A673 (cell line): ENCODE measurements at regions of chr5 and their contacts with region 1.

Region 1: DNA sequence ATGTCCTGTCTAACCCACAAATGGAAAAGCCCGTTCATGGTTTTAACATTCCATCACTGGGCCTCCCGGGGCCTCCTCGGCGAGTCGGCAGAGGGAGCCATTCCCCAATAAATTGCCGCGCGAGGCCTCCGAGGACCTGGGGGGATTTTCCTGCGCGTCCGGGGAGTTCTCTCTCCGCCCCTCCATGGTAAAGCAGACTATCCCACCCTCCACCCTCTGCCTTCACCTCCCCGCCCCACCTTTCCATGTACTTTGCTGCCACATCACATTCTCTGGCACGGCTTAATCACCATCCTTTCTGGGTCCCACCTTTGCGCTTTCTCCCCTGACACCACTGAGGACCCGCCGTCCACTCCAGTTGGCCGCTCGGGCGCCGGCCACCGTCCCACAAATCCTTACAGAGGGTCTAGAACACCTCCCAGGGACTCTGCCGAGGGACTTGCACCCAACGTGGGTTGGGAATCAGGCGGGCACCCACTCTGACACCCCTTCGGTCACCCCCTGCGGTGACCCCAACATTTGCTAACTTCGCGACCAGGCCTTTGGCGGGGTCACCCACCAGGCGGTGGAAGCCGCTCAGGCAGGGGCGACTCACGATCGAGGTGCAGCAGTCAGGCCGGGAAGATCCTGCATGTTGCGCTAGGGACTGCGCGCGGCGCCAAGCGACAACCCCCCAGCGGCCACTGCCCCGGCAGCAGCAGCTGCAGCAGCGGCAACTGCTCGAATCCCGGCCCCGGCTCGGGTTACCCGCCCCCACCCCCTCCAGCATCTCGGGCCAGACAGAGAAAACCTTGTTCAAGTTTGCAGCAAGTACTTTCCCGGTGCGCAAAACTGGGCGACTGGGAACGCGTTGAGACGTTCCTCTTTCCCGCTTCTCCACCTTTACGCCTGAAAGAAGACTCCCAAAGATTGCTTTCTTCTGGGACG is at the start of gene MEGF10:
- DNase-seq: peak; percentile 69
- H3K4me3 ChIP-seq: peak within 1 kb of the TSS; percentile 40
- H3K27ac ChIP-seq: no peak within 1 kb of the TSS
- H3K4me1 ChIP-seq: peaks cover 7% of the 10 kb centered on the region
- H3K27me3 ChIP-seq: peaks cover 41% of the 10 kb centered on the region
- CTCF ChIP-seq: peak; percentile 88
- total RNA-seq, gene MEGF10: 0.71 and 0.87 TPM in 2 replicates

Region 2: DNA sequence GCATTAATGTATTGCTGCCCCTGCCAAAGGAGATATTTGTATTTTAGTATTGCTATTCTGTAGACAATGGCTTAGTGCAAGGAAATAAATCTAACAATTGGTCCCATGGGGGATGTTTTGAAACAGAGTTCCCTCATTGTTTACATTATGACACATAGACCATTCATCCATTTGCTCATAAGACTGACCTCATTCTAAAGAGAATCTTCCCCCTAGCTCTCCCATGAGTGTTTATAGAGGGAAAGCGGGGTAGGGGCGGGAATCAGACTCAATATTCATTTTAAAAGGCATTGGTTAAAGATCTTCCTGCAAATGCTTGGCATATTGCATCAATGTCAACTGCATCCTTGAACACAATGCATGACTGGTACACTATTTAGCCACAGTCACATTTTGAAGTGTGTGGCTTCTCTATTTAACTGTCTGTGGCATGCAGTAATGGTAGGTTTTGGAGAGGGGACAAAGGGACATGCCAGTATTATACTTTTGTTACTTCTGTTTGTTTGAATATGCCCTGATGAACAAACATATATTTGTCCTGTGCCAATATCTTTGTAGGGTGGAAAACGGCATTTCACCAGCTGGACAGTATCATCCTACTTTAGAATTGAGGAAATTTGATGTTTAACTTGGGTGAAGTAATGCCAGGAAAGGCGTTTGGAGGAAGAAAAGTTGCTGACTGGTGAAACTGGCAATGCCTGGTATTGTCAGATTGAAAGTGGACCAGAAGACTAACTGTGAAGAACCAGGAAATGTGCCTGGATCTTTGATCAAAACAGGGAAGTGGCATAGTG is 83.8 kb before region 1 on chr5:
- CTCF ChIA-PET with region 1: no interaction called
- POLR2A ChIA-PET with region 1: no interaction called
- intact Hi-C with region 1: no loop called
- DNase-seq: peak; percentile 33
- H3K4me3 ChIP-seq: no peak overlapping the region
- H3K27ac ChIP-seq: no peak overlapping the region
- H3K4me1 ChIP-seq: no peaks in the 10 kb centered on the region
- H3K27me3 ChIP-seq: peaks cover 12% of the 10 kb centered on the region
- CTCF ChIP-seq: no peak

Region 3: GRCh38 chr5:127235136-127235535 is 55.1 kb before region 1 on chr5:
- CTCF ChIA-PET with region 1: no interaction called
- POLR2A ChIA-PET with region 1: no interaction called
- intact Hi-C with region 1: no loop called
- DNase-seq: no peak
- H3K4me3 ChIP-seq: no peak overlapping the region
- H3K27ac ChIP-seq: no peak overlapping the region
- H3K4me1 ChIP-seq: no peaks in the 10 kb centered on the region
- H3K27me3 ChIP-seq: peaks cover 10% of the 10 kb centered on the region
- CTCF ChIP-seq: no peak

Region 4: DNA sequence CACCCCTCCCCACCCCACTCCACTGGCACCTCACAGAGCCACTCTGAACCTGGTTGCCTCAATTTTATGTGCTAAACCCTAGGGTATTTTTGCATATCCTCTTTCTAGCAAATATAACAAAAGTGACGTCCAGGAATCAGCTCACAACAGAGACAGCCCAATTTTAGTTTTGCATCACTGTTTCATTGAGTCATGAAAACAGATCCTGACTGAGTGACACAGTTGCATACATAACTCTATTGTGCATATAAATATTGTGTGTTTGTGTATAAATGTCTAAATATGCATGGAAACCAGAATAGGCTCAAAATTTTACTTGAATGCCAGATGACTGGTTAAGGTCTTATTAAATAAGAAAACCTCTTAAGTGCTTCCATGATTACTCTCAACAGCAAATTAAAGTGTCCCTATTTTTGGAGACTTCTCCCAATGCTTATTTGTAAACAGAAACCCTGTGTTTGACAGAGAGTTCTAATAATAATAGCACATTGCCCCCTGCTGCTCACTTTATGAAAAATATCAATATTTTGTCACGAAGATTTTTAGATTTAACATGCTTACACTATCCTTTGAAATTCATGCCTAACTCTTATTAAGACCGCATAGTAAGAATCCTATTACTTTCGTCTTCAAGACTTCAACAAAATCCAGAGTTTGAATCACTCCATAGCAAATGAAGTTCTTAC is 151.7 kb after region 1 on chr5:
- CTCF ChIA-PET with region 1: no interaction called
- POLR2A ChIA-PET with region 1: no interaction called
- intact Hi-C with region 1: loop called (anchors 1 kb)
- DNase-seq: peak; percentile 44
- H3K4me3 ChIP-seq: no peak overlapping the region
- H3K27ac ChIP-seq: no peak overlapping the region
- H3K4me1 ChIP-seq: no peaks in the 10 kb centered on the region
- H3K27me3 ChIP-seq: no peaks in the 10 kb centered on the region
- CTCF ChIP-seq: peak; percentile 52

Region 5: DNA sequence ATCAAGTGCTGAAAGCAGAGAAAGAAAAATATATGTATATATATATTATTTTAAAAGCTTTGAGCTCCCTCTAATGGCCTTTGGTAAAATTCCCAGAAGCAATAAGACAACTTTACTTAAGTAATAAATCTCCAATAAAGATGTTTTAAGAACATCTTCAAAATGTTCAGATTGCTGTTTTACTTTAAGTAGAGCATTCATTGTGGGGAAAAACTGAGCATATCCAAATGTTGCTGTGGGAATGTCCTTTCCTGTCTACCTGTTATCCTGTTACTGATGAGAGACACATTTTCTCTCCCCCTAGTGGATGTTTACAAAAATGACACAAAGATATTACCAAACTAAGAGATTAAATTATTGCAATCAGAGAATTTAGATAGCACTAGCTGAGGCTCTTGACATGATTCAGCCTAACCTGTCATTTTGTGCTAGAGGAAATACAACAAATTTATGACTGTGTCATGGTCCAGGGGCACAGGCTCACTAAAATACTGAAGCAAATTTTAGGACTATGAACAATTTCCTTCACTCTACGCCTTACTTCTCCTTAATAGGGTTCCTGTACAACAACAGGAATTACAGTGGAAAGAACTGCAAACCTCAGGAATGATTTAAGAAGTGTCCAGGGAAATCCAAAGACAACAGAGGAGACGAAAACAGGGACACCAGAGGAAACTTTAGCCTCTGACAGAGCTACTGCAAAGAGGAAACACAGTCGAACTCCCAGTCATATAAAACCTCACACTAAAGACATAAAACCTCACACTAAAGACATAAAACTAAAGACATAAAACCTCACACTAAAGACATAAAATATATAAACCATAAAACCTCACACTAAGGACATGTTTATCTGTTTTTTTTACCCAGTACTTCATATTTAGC is 202.8 kb after region 1 on chr5:
- CTCF ChIA-PET with region 1: no interaction called
- POLR2A ChIA-PET with region 1: no interaction called
- intact Hi-C with region 1: loop called (anchors 1 kb)
- DNase-seq: peak; percentile 62
- H3K4me3 ChIP-seq: no peak overlapping the region
- H3K27ac ChIP-seq: no peak overlapping the region
- H3K4me1 ChIP-seq: no peaks in the 10 kb centered on the region
- H3K27me3 ChIP-seq: peaks cover 6% of the 10 kb centered on the region
- CTCF ChIP-seq: peak; percentile 94

Region 6: DNA sequence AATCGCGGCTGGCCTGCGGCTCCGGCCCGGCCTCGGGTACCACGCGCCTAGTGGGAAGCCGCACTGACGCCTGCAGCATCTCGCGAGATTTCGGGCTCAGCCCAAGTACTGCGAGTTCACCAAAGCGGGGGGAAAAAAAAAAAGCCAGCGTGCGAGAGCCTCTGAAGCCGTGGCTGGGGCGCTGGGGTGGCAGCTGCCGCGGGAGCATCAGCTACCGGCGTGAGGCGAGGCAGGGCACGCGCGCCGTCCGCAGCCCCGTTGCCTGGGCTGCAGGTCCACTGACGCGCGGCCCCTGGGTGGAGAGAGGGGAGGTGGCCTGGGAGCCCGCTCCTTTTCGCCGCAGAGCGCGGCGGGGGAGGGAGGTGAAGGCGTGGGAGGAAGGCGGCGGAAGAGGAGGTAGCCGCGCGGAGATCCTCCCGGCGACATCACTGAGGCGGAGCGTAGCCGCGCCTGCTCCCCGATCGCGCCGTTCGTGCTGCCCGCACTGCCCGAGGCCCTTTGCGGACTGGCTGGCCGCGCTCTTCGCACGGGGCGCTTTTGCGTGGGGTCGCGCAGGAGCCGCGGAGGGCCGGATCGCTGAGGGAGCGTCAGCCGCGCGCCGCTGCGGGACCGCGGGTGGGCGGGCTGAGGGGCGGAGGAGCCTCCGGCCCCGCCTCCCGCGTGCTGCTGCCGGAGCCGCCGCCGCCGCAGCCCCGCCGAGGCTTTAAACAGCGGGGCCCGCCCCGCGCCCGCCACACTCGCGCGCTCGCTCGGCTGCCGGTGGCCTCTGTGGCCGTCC is 792.9 kb after region 1 on chr5 and contains the start of gene SLC12A2:
- CTCF ChIA-PET with region 1: no interaction called
- POLR2A ChIA-PET with region 1: no interaction called
- intact Hi-C with region 1: loop called (anchors 5 kb)
- DNase-seq: peak; percentile 93
- H3K4me3 ChIP-seq: peak within 1 kb of the TSS; percentile 76
- H3K27ac ChIP-seq: peak within 1 kb of the TSS; percentile 75
- H3K4me1 ChIP-seq: no peaks in the 10 kb centered on the region
- H3K27me3 ChIP-seq: peaks cover 31% of the 10 kb centered on the region
- CTCF ChIP-seq: no peak
- total RNA-seq, gene SLC12A2: 10.4 and 10.7 TPM in 2 replicates